AG04449 (cell line): ENCODE measurements at regions of chr2 and their contacts with region 1.

Region 1: GRCh38 chr2:224357098-224357901 is 44.6 kb downstream of the FAM124B start:
- DNase-seq: no peak
- H3K4me3 ChIP-seq: no peak overlapping the region
- CTCF ChIP-seq: peak; percentile 53

Region 2: DNA sequence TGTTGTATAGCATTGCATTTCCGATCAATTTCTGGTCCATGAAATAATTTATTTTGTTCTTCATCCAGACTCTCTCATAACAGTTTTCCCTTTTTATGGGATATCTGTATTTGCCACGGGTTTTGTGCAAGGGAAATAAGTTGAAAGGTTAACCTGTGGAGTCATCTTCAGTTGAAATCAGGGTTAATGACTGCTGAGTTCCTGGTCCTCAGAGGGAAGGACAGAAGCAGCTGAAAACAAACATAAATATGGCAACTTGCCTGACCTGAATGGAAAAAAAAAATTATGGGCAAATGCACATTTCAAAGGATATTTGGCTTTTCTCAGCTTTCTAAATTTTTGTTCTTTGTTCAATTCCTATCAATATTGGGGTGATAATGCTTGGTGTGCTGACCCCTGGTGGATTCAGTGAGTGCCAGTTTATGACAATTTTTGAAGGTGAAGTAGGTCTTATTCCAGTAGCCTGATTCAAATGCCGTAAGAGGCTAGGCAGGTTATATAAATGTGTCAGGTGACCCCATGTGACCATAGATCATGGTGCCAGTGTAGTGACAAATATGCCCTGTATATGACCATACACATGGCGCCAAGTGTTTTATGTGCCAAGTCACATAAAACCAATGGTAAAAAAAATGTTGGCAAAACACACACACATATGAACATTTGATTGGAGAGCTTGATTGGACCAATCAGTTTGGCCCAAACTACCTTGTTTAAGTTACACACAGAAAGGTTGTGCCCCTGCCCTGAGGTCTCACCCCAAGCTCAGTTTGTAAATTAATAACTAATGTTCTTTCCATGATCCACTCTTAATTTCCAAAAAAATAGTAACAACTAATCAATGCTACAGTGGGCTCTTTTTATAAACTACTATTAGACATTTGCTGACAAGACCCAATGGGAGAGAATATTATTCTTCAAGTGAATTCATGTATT is 92.2 kb after region 1 on chr2:
- CTCF ChIA-PET with region 1: interaction called, 10 read pairs
- POLR2A ChIA-PET with region 1: no interaction called
- DNase-seq: no peak
- H3K4me3 ChIP-seq: no peak overlapping the region
- CTCF ChIP-seq: peak; percentile 45

Region 3: GRCh38 chr2:224650815-224651439 is 293.6 kb after region 1 on chr2:
- CTCF ChIA-PET with region 1: interaction called, 214 read pairs
- POLR2A ChIA-PET with region 1: no interaction called
- DNase-seq: peak; percentile 10
- H3K4me3 ChIP-seq: no peak overlapping the region
- CTCF ChIP-seq: peak; percentile 69

Region 4: GRCh38 chr2:224778474-224778877 is 421.2 kb after region 1 on chr2:
- CTCF ChIA-PET with region 1: interaction called, 22 read pairs
- POLR2A ChIA-PET with region 1: no interaction called
- DNase-seq: peak; percentile 33
- H3K4me3 ChIP-seq: no peak overlapping the region
- CTCF ChIP-seq: peak; percentile 71